ENCODE measurements at regions of chr17 and their contacts with region 1.

Region 1: DNA sequence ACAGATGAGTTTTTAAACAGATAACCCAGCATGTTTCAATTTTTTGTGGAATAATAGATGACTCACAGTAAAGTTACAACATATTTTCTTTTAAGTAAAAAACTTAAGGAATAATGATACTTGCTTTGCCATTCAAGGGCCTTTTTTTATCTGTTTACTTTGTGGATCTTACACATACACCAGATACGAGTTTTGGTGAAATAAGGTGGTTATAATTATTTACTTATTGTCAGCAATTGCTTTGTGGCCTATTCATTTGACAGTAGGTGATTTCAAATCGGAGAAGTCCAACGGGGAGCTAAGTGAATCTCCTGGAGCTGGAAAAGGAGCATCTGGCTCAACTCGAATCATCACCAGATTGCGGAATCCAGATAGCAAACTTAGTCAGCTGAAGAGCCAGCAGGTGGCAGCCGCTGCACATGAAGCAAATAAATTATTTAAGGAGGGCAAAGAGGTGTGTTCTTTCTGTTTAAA is 66.3 kb downstream of the BPTF start:
- DNase-seq: no peak
- ATAC-seq: no peak
- H3K4me3 ChIP-seq: no peak overlapping the region
- H3K27ac ChIP-seq: no peak overlapping the region
- H3K4me1 ChIP-seq: no peaks in the 10 kb centered on the region
- H3K27me3 ChIP-seq: no peaks in the 10 kb centered on the region
- CTCF ChIP-seq: peak in 6 of 9 donors; percentile 12 to 46 (median 20)

Region 2: GRCh38 chr17:68591583-68591982 is 700.0 kb after region 1 on chr17:
- intact Hi-C with region 1: loop called in 1 of 10 experiments (anchors 5 kb)
- DNase-seq: peak; percentile 29 to 31
- ATAC-seq: peak in 2 of 8 donors; percentile 24 to 52
- H3K4me3 ChIP-seq: no peak overlapping the region
- H3K27ac ChIP-seq: peak overlapping the region in 1 of 10 donors; percentile 45
- H3K4me1 ChIP-seq: peaks cover 0 to 50% (median 15%) of the 10 kb centered on the region in 9 donors
- H3K27me3 ChIP-seq: no peaks in the 10 kb centered on the region
- CTCF ChIP-seq: no peak